ENCODE measurements at regions of chr12 and their contacts with region 1.

Region 1: GRCh38 chr12:30754709-30755394 is at the start of gene CAPRIN2:
- DNase-seq: peak; percentile 98 to 100
- H3K4me3 ChIP-seq: peak within 1 kb of the TSS; percentile 83
- H3K4me3 Mint-ChIP-seq: peak within 1 kb of the TSS; percentile 93
- H3K27ac Mint-ChIP-seq: peak within 1 kb of the TSS; percentile 30
- H3K4me1 ChIP-seq: peaks cover 12% of the 10 kb centered on the region; the same call in 1 of the 2 replicates
- H3K4me1 Mint-ChIP-seq: peaks cover 27% of the 10 kb centered on the region
- H3K27me3 ChIP-seq: no peaks in the 10 kb centered on the region
- H3K27me3 Mint-ChIP-seq: no peaks in the 10 kb centered on the region
- CTCF ChIP-seq: peak; percentile 61 to 69
- total RNA-seq, gene CAPRIN2: 19.6 and 21.7 TPM in 2 replicates

Region 2: DNA sequence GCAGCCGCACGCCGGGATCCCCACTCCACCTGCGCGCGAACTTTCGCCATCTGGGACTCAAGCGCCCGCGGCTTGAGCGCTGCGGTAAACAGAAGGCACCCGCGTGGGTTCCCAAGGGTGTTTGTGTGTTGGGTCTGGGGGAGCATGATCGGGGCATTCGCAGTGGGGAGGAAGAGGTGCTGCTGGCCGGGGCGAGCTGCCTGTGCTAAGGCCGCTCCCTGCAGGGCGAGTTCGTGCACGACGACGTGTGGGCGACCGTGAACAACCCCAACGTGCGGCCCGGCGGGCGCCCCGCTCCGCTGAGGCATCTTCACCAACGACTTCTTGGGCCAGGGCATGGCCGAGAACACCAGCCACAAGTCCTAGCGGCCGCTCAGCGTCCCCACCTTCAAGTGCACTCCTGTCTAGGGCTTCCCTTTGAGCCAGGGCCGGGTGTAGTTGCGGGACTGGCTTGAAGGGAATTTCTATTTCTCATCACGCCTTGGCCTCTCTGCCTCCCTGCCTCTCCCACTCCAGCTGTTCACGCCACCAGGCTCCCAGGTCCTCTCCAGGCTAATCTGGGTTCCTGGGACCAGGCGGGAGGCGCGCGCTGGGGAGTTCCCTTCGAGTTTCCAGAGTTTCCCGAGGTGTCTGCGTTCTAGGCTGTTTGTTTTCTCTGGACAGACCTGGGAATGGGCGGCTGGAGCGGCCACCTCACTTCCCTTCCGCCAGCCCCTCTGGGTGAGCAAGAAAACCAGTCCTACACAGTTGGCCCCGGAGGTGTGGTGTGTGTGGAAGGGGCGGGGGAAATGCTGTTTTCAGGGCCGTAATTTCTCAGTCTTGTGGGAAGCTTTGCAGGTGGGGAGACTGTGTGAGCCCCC is 553.3 kb before region 1 on chr12:
- CTCF ChIA-PET with region 1: no interaction called
- POLR2A ChIA-PET with region 1: no interaction called
- intact Hi-C with region 1: loop called (anchors 10 kb)
- DNase-seq: peak; percentile 24 to 48
- H3K4me3 ChIP-seq: no peak overlapping the region
- H3K4me3 Mint-ChIP-seq: peak overlapping the region; percentile 33
- H3K27ac Mint-ChIP-seq: peak overlapping the region; percentile 90
- H3K4me1 ChIP-seq: peaks cover 27% of the 10 kb centered on the region
- H3K4me1 Mint-ChIP-seq: peaks cover 24% of the 10 kb centered on the region
- H3K27me3 ChIP-seq: no peaks in the 10 kb centered on the region
- H3K27me3 Mint-ChIP-seq: no peaks in the 10 kb centered on the region
- CTCF ChIP-seq: no peak

Region 3: GRCh38 chr12:30719060-30719459 is 35.8 kb before region 1 on chr12:
- CTCF ChIA-PET with region 1: no interaction called
- POLR2A ChIA-PET with region 1: no interaction called
- intact Hi-C with region 1: loop called (anchors 5 kb)
- DNase-seq: no peak
- H3K4me3 ChIP-seq: no peak overlapping the region
- H3K4me3 Mint-ChIP-seq: no peak overlapping the region
- H3K27ac Mint-ChIP-seq: no peak overlapping the region
- H3K4me1 ChIP-seq: no peaks in the 10 kb centered on the region
- H3K4me1 Mint-ChIP-seq: no peaks in the 10 kb centered on the region
- H3K27me3 ChIP-seq: no peaks in the 10 kb centered on the region
- H3K27me3 Mint-ChIP-seq: no peaks in the 10 kb centered on the region
- CTCF ChIP-seq: no peak

Region 4: GRCh38 chr12:30732954-30733637 is 21.8 kb before region 1 on chr12:
- CTCF ChIA-PET with region 1: no interaction called
- POLR2A ChIA-PET with region 1: no interaction called
- intact Hi-C with region 1: no loop called
- DNase-seq: no peak
- H3K4me3 ChIP-seq: no peak overlapping the region
- H3K4me3 Mint-ChIP-seq: no peak overlapping the region
- H3K27ac Mint-ChIP-seq: no peak overlapping the region
- H3K4me1 ChIP-seq: no peaks in the 10 kb centered on the region
- H3K4me1 Mint-ChIP-seq: no peaks in the 10 kb centered on the region
- H3K27me3 ChIP-seq: no peaks in the 10 kb centered on the region
- H3K27me3 Mint-ChIP-seq: no peaks in the 10 kb centered on the region
- CTCF ChIP-seq: no peak

Region 5: DNA sequence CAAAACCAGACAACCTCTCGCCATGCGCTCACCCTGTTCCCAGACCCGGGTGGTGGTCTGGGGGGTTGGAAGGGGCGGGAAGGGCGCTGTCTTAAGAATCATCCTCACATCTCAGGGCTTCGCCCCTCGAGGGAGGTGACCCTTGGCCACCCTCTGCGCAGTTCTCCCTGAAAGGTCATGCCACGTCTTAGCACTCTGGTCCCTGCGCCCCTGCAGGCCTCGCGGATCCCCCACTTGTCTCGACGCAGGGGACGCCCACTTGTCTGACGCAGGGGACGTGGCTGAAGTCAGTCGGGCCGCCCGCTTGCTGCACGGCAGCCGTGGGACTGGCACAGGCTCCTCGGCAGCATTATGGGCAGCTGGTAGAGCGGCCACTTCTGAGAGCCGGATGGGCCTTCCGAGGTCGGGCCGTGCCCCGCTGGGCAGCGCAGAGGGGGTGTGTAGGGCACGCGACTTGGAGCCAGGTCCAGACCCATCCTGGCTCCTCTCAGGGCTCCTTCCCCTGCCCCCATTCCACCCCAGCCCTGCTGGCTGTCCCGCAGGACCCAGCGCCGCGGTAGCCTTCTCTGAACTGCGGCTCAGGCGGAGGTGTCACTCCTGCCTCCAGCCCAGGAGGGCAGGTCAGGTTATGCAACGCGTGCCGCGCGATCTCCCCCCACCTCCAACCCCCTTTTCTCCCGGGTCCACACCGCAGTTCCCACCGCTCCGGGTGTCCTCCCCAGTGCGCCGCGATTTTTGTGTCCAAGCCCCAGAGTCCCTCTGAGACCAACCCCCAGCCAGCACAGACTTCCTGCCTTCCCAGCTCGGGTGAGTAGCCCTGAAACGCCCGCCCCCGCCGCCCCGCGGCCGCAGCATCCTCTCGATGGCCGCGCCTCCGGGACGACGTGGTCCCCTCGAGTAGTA is 40.8 kb after region 1 on chr12:
- CTCF ChIA-PET with region 1: interaction called, 21 read pairs
- POLR2A ChIA-PET with region 1: interaction called, 3 read pairs
- intact Hi-C with region 1: loop called (anchors 1 kb)
- DNase-seq: peak; percentile 75 to 76
- H3K4me3 ChIP-seq: peak overlapping the region; percentile 75
- H3K4me3 Mint-ChIP-seq: peak overlapping the region; percentile 80
- H3K27ac Mint-ChIP-seq: no peak overlapping the region
- H3K4me1 ChIP-seq: peaks cover 34% of the 10 kb centered on the region
- H3K4me1 Mint-ChIP-seq: peaks cover 25% of the 10 kb centered on the region
- H3K27me3 ChIP-seq: no peaks in the 10 kb centered on the region
- H3K27me3 Mint-ChIP-seq: peaks cover 3% of the 10 kb centered on the region
- CTCF ChIP-seq: no peak

Region 6: GRCh38 chr12:30806989-30807694 is 52.3 kb after region 1 on chr12:
- CTCF ChIA-PET with region 1: interaction called, 19 read pairs
- POLR2A ChIA-PET with region 1: no interaction called
- intact Hi-C with region 1: loop called (anchors 1 kb)
- DNase-seq: peak in 1 of 2 experiments; percentile 74
- H3K4me3 ChIP-seq: no peak overlapping the region
- H3K4me3 Mint-ChIP-seq: no peak overlapping the region
- H3K27ac Mint-ChIP-seq: no peak overlapping the region
- H3K4me1 ChIP-seq: no peaks in the 10 kb centered on the region
- H3K4me1 Mint-ChIP-seq: no peaks in the 10 kb centered on the region
- H3K27me3 ChIP-seq: no peaks in the 10 kb centered on the region
- H3K27me3 Mint-ChIP-seq: peaks cover 6% of the 10 kb centered on the region
- CTCF ChIP-seq: peak; percentile 80 to 94

Region 7: DNA sequence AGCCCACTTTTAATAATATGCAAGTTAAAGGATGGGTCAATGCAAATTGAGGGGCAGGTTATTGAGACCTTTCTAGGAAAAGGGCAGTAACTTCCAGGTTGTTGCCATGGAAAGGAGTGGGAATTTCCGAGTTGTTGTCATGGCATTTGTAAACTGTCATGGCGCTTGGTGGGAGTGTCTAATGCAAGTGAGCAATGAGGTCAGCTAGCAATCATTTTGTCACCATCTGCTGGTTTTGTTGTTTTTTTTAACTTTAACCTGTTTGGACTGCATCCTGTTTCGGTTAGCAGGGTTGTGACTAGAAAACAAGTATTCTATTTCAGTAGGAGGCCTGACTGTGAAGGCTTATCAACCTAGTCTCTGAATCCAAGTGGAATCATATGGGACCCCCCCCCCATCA is 85.9 kb after region 1 on chr12:
- CTCF ChIA-PET with region 1: no interaction called
- POLR2A ChIA-PET with region 1: no interaction called
- intact Hi-C with region 1: loop called (anchors 5 kb)
- DNase-seq: no peak
- H3K4me3 ChIP-seq: no peak overlapping the region
- H3K4me3 Mint-ChIP-seq: no peak overlapping the region
- H3K27ac Mint-ChIP-seq: no peak overlapping the region
- H3K4me1 ChIP-seq: no peaks in the 10 kb centered on the region
- H3K4me1 Mint-ChIP-seq: peaks cover 7% of the 10 kb centered on the region
- H3K27me3 ChIP-seq: no peaks in the 10 kb centered on the region; the same call in 1 of the 2 replicates
- H3K27me3 Mint-ChIP-seq: peaks cover 23% of the 10 kb centered on the region
- CTCF ChIP-seq: no peak

Region 8: DNA sequence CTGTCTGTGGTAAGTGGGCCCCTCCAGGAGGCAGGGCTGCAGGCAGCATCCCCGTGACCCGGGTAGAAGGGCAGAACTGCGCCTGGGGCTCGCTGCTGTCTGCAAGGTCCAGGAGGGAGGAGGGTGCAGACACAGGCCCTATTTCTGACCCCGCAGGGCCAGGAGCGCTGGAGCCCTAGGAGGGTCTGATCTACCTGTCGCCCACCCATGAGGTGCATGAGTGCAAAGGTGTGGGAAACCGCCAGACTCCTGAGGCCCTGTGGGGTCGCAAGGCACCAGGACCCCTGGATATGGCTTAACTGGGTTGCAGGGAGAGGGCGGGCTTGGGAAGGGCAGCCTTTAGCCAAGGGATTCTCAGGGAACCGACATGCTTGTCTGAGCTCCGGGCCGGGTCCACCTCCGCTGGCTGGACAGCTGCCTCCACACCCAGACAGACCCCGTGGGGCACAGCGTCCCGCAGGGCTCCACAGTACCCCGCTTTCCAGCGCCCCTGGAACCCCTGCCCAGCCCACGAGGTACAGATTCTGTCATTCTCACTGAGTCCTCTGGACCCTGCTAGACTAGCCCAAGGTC is 98.8 kb after region 1 on chr12:
- CTCF ChIA-PET with region 1: no interaction called
- POLR2A ChIA-PET with region 1: no interaction called
- intact Hi-C with region 1: no loop called
- DNase-seq: no peak
- H3K4me3 ChIP-seq: no peak overlapping the region
- H3K4me3 Mint-ChIP-seq: no peak overlapping the region
- H3K27ac Mint-ChIP-seq: no peak overlapping the region
- H3K4me1 ChIP-seq: 0 out of 2 replicates have a peak, but pooled peaks cover 4% of the 10 kb centered on the region
- H3K4me1 Mint-ChIP-seq: peaks cover 8% of the 10 kb centered on the region
- H3K27me3 ChIP-seq: no peaks in the 10 kb centered on the region
- H3K27me3 Mint-ChIP-seq: peaks cover 10% of the 10 kb centered on the region
- CTCF ChIP-seq: no peak

Measured in Caco-2 (cell line).